Right ventricle myocardium inferior (tissue), 1 donor: ENCODE measurements at regions of chr14 and their contacts with region 1.

Region 1: DNA sequence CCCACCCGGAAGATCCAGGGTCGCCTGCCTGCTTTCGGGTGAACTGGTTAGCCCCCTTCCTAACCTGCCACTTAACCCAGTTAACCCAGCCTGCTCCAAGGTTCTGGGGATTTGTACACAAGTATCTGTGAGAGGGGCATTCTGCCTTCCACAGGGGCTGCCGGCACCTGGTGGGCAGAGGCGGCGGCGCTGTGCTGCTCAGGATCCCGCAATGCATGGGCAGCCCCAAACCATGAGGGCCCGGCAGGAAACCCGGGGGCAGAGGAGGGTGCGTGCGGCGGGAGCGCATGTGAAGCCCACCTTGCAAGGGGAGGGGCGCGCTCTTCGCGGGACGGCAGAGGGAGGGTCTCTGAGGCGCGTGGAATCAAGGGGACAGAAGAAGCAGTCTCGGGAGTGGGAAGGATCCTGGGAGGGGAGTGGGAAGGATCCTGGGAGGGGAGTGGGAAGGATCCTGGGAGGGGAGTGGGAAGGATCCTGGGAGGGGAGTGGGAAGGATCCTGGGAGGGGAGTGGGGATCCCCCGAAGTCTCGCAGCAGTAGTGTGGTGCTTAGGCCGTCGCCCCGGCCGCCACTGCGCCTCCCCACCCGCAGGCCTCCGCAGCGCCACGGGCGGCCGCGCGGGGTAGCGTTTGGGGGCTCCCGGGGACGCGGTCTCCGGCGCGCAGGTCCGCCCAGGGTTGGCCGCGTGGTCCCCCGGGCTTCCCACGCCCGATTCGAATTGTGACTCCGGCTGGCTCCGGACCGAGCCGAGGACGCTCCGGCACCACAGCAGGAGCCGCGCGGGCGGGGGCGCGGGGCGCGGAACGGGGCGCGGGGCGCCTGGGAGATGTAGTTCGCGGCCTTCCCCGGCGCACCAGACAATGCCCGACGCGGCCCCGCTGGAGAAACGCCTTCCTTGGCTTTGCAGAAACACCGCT is 4.9 kb upstream of the MTA1 start:
- DNase-seq: peak; percentile 89
- ATAC-seq: peak; percentile 84

Region 2: DNA sequence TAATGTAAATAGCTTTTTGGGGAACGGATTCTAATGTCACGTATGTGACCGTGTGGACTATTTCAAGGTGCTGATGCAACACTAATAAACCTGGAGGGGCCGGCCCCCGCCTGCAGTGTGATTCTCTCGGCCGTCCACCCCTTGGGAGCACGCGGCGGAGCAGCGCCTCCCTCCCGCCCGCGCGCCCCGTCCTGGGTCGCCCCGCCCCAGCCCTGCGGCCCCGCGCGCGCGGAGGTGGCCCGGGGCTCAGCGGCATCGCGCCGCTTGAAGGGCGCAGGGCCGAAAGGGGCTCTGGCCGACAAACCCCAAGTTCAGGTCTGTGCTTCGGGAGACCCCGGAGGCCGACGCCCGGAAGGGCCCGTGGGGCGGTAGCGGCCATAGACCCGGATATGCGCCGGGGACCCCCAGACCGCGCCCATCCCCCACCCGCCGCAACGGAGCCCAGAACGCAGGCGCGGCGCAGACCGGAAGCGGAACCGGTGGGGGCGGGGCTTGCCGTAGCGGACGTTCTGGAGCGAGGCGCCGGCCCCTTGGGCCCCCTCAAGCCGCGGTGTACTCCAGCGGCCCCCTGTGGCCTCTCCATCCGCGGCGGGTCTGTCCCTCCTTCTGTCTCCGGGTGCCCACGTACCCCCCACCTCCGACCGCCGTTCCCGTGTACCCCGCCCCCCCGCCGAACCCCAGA is 16.5 kb before region 1 on chr14 and contains the start of gene TEX22:
- intact Hi-C with region 1: loop called (anchors 2 kb)
- DNase-seq: peak; percentile 95
- ATAC-seq: peak; percentile 94
- total RNA-seq, gene TEX22: 2.4 TPM

Region 3: DNA sequence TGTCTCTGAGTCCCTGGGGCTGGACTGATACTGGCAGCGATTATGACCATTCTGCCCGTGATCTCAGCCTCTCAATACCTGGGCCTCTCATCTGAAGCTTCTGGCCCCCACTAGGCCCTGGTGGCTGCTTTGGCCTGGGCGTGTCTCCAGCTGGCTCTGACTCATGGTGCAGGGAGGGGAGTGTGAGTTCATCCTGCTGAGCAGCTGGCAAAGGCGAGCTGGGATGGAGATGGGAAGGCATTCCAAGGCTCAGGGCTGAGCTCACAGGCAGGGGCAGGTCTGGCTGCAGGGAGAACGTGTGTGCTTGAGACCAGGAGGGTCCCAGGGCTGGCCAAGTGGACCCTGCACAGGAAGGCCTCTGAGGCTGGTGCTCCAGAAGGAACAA is 333.5 kb after region 1 on chr14:
- intact Hi-C with region 1: no loop called
- DNase-seq: no peak
- ATAC-seq: peak; percentile 66